Endothelial cell of umbilical vein (primary cell): ENCODE measurements at regions of chr5 and their contacts with region 1.

Region 1: GRCh38 chr5:106154280-106154741 is 1516.4 kb downstream of the EFNA5 start:
- DNase-seq: no peak
- H3K4me3 ChIP-seq: no peak overlapping the region
- H3K27ac ChIP-seq: no peak overlapping the region
- H3K4me1 ChIP-seq: no peaks in the 10 kb centered on the region
- H3K27me3 ChIP-seq: no peaks in the 10 kb centered on the region
- CTCF ChIP-seq: no peak
- POLR2A ChIP-seq: no peak

Region 2: DNA sequence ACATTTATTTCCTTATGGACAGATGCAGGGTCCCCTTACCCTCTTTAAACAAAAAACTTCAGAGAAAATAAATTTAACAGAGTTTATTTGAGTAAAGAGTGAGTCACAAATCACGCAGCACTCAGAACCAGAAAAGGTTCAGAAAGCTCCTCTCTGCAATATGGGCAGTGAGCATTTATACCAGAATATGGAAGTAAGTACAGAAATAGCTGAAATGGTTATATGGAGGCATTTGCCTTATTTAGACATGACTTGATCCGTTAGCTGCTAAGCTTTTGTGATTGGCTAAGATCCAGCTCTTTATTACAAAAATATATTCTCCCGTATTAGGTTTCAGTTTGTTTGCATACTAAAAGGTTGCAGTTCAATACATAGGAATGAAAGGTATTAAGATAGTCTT is 37.6 kb before region 1 on chr5:
- CTCF ChIA-PET with region 1: no interaction called
- POLR2A ChIA-PET with region 1: no interaction called
- dilution Hi-C with region 1: no loop called
- intact Hi-C with region 1: no loop called
- DNase-seq: no peak
- H3K4me3 ChIP-seq: no peak overlapping the region
- H3K27ac ChIP-seq: no peak overlapping the region
- H3K4me1 ChIP-seq: no peaks in the 10 kb centered on the region
- H3K27me3 ChIP-seq: no peaks in the 10 kb centered on the region
- CTCF ChIP-seq: no peak
- POLR2A ChIP-seq: no peak

Region 3: GRCh38 chr5:106142116-106142515 is 12.2 kb before region 1 on chr5:
- CTCF ChIA-PET with region 1: interaction called, 3 read pairs
- POLR2A ChIA-PET with region 1: no interaction called
- dilution Hi-C with region 1: no loop called
- intact Hi-C with region 1: loop called (anchors 1 kb)
- DNase-seq: no peak
- H3K4me3 ChIP-seq: no peak overlapping the region
- H3K27ac ChIP-seq: no peak overlapping the region
- H3K4me1 ChIP-seq: no peaks in the 10 kb centered on the region
- H3K27me3 ChIP-seq: no peaks in the 10 kb centered on the region
- CTCF ChIP-seq: no peak
- POLR2A ChIP-seq: no peak

Region 4: GRCh38 chr5:106759581-106759980 is 605.3 kb after region 1 on chr5:
- CTCF ChIA-PET with region 1: no interaction called
- POLR2A ChIA-PET with region 1: no interaction called
- dilution Hi-C with region 1: no loop called
- intact Hi-C with region 1: no loop called
- DNase-seq: peak; percentile 8
- H3K4me3 ChIP-seq: no peak overlapping the region
- H3K27ac ChIP-seq: no peak overlapping the region
- H3K4me1 ChIP-seq: no peaks in the 10 kb centered on the region
- H3K27me3 ChIP-seq: no peaks in the 10 kb centered on the region
- CTCF ChIP-seq: no peak
- POLR2A ChIP-seq: no peak